T-cell (primary cell): ENCODE measurements at regions of chr12 and their contacts with region 1.

Region 1: GRCh38 chr12:124970647-124971402 is 18.1 kb downstream of the DHX37 start:
- DNase-seq: no peak
- ATAC-seq: no peak
- H3K4me3 ChIP-seq: no peak overlapping the region
- H3K4me3 Mint-ChIP-seq: no peak overlapping the region
- H3K27ac ChIP-seq: no peak overlapping the region
- H3K27ac Mint-ChIP-seq: no peak overlapping the region
- H3K4me1 ChIP-seq: no peaks in the 10 kb centered on the region
- H3K4me1 Mint-ChIP-seq: no peaks in the 10 kb centered on the region
- H3K27me3 ChIP-seq: no peaks in the 10 kb centered on the region
- H3K27me3 Mint-ChIP-seq: no peaks in the 10 kb centered on the region

Region 2: DNA sequence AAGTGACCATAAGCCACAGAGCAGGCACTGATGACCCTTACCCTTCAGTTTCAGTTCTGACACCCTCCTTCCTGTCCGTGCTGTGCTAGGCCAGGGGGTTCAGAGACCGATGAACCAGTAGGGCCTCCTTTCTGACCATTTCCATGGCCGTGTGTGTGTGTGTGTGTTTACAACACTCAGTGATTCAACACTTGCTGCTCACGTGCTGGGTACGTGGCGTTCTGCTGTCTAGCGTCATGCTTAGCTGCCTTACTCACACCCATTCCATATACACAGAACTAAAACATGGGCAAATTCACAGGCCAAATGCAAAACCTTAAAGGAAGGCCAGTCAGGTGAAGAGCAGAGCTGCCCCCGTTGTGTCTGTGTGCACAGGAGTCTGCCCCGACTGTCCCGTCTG is 1141.3 kb before region 1 on chr12:
- CTCF ChIA-PET with region 1: no interaction called
- POLR2A ChIA-PET with region 1: interaction called in 1 of 2 experiments, 15 read pairs
- DNase-seq: no peak
- ATAC-seq: no peak
- H3K4me3 ChIP-seq: no peak overlapping the region
- H3K4me3 Mint-ChIP-seq: no peak overlapping the region
- H3K27ac ChIP-seq: no peak overlapping the region
- H3K27ac Mint-ChIP-seq: no peak overlapping the region
- H3K4me1 ChIP-seq: no peaks in the 10 kb centered on the region
- H3K4me1 Mint-ChIP-seq: peaks cover 0 to 4% (median 1%) of the 10 kb centered on the region in 3 donors
- H3K27me3 ChIP-seq: peaks cover 0 to 6% of the 10 kb centered on the region in 2 experiments
- H3K27me3 Mint-ChIP-seq: peaks cover 3 to 21% of the 10 kb centered on the region in 2 donors